Ovary (tissue), 10 donors: ENCODE measurements at regions of chr9 and their contacts with region 1.

Region 1: GRCh38 chr9:121545875-121546423 is 46.3 kb upstream of the GGTA1 start:
- DNase-seq: peak; percentile 93 to 96 (median 95)
- H3K4me3 ChIP-seq: no peak overlapping the region
- H3K27ac ChIP-seq: no peak overlapping the region
- H3K4me1 ChIP-seq: no peaks in the 10 kb centered on the region
- H3K27me3 ChIP-seq: no peaks in the 10 kb centered on the region
- CTCF ChIP-seq: peak; percentile 93 to 97 (median 95)
- EP300 ChIP-seq: no peak
- POLR2A ChIP-seq: no peak

Region 2: DNA sequence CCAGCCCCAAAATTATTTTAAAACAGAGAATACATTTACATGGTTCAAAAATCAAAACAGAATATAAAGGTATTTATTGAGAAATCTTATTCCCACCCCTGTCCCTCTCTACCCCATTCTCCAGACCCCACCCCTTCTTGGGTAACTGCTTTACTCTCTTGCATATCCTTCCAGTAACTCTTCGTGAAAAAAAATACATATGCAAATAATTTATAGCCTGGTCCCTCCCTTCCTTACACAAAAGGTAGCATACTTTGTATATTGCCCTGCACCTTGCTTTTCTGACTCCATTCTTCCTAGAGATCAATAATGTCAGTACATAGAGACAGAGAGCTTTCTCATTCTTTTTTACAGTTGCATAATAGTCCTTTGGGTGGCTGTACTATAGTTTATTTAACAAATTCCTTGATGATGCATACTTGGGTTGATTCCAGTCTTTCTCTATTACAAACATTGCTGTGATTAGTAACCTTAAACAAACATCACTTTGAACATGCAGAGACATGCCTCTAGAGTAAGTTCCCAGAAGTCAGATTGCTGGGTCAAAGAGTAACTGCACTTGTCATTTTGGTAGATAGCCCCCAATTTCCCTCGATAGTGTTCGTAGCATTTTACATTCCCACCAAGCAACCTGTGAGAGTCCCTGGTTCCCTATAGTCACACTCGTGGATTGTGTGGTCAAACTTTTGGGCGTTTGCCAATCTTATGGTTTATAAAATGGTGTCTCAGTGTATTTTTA is 223.7 kb before region 1 on chr9:
- intact Hi-C with region 1: no loop called
- DNase-seq: no peak
- H3K4me3 ChIP-seq: no peak overlapping the region
- H3K27ac ChIP-seq: no peak overlapping the region
- H3K4me1 ChIP-seq: peaks cover 12% of the 10 kb centered on the region
- H3K27me3 ChIP-seq: no peaks in the 10 kb centered on the region
- CTCF ChIP-seq: no peak
- EP300 ChIP-seq: no peak
- POLR2A ChIP-seq: no peak

Region 3: DNA sequence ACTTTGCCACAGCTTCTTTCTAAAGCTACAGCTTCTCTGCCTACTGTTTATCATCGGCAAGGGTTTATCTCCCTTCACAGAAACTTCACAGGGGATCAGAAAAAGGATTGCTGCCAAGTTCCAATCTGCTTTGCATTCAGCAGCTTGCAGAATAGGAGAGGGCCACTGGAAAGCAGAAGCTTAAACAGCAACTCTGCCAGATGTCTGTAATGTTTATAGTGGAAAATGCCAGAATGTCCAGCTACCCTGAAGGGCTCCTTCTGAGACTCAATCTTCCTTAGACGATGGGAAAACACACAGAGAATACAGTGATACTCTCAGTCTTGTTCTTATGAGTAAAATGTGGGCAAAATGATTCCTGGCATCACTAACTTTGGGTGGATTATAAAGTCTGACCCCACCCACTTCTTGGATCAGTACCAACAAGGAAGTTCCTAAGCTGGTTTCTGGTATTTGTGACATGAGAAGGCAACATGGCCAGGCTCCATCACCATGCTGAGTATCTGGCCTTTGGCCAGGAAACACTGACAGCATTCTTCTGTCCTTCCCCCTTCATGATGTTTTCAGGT is 194.9 kb before region 1 on chr9:
- intact Hi-C with region 1: no loop called
- DNase-seq: peak; percentile 52 to 69 (median 62)
- H3K4me3 ChIP-seq: no peak overlapping the region
- H3K27ac ChIP-seq: peak overlapping the region in 1 of 2 donors; percentile 66
- H3K4me1 ChIP-seq: peaks cover 28% of the 10 kb centered on the region
- H3K27me3 ChIP-seq: no peaks in the 10 kb centered on the region
- CTCF ChIP-seq: no peak
- EP300 ChIP-seq: no peak
- POLR2A ChIP-seq: no peak

Region 4: GRCh38 chr9:121609845-121610570 is 64.1 kb after region 1 on chr9:
- intact Hi-C with region 1: loop called in 1 of 4 experiments (anchors 10 kb)
- DNase-seq: peak in 4 of 5 donors; percentile 44 to 53 (median 48)
- H3K4me3 ChIP-seq: no peak overlapping the region
- H3K27ac ChIP-seq: no peak overlapping the region
- H3K4me1 ChIP-seq: peaks cover 2% of the 10 kb centered on the region
- H3K27me3 ChIP-seq: no peaks in the 10 kb centered on the region
- CTCF ChIP-seq: no peak
- EP300 ChIP-seq: no peak
- POLR2A ChIP-seq: no peak

Region 5: GRCh38 chr9:121735065-121735789 is 189.3 kb after region 1 on chr9:
- intact Hi-C with region 1: no loop called
- DNase-seq: peak in 2 of 5 donors; percentile 45 to 47
- H3K4me3 ChIP-seq: peak overlapping the region; percentile 45
- H3K27ac ChIP-seq: peak overlapping the region; percentile 64 to 67
- H3K4me1 ChIP-seq: peaks cover 55% of the 10 kb centered on the region
- H3K27me3 ChIP-seq: no peaks in the 10 kb centered on the region
- CTCF ChIP-seq: no peak
- EP300 ChIP-seq: no peak
- POLR2A ChIP-seq: no peak

Region 6: DNA sequence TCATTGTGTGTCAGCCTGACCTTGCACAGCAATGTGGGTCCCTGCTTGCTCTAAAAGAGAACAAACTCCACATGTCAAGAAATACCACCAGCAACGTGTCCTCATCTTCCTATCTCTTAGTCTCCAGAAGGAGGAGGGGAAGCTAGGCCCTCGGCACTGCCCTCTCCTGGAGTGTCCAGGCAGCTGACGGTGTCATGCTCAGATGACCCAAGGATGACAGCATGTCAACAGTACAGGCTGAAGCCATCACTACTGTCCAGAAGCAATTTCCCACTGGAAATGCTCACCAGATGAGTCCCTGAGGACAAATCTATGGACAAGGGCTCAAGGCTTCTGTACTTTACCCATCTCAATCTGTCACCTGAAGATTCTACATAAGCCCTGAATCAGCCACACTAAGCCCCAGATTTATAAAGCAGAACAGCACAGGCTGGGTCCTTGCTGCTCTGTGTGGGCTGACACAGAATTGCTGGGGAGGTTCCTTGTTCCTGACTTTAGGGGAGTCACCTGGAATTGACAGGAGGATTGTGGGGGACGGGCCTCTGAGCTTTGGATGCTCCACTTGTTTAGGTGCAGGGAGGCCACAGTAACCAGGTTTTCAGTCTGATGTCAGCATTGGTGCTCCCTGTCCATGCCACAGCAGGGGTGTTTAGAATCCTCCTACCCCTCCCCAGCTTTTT is 315.7 kb after region 1 on chr9:
- intact Hi-C with region 1: loop called in 1 of 4 experiments (anchors 2 kb)
- DNase-seq: no peak
- H3K4me3 ChIP-seq: no peak overlapping the region
- H3K27ac ChIP-seq: peak overlapping the region in 1 of 2 donors; percentile 36
- H3K4me1 ChIP-seq: peaks cover 5% of the 10 kb centered on the region
- H3K27me3 ChIP-seq: no peaks in the 10 kb centered on the region
- CTCF ChIP-seq: peak in 2 of 3 donors; percentile 16 to 34
- EP300 ChIP-seq: no peak
- POLR2A ChIP-seq: no peak

Region 7: DNA sequence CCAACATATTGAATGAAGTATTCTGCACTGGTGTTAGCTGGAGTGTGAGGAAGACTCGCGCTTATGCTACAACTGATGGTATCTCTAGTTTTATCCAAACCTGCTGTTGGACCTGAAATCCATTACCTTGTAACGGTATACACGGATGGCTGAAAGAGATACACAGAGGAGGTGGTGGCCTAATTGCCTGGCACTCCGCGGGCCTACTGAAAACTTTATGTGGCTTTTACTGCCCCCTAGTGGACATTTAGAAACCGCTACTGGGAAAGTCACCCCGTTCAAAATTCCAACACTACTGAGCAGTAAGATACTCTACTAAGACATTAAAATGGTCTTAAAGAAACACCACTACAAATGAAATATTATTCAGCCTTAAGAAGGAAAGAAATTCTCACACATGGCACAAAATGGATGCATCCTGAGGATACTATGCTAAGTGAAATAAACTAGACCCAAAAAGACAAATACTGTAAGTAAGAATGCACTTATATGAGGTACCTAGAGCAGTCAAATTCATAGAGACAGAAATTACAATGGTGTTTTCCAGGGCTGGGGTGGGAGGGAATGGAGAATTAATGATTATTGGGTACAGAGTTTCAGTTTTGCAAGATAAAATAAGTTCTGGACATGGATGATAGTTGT is 446.7 kb after region 1 on chr9:
- intact Hi-C with region 1: loop called (anchors 5 to 10 kb)
- DNase-seq: peak; percentile 54 to 77 (median 66)
- H3K4me3 ChIP-seq: no peak overlapping the region
- H3K27ac ChIP-seq: no peak overlapping the region
- H3K4me1 ChIP-seq: peaks cover under 1% of the 10 kb centered on the region
- H3K27me3 ChIP-seq: no peaks in the 10 kb centered on the region
- CTCF ChIP-seq: peak; percentile 81 to 86 (median 84)
- EP300 ChIP-seq: no peak
- POLR2A ChIP-seq: no peak

Region 8: DNA sequence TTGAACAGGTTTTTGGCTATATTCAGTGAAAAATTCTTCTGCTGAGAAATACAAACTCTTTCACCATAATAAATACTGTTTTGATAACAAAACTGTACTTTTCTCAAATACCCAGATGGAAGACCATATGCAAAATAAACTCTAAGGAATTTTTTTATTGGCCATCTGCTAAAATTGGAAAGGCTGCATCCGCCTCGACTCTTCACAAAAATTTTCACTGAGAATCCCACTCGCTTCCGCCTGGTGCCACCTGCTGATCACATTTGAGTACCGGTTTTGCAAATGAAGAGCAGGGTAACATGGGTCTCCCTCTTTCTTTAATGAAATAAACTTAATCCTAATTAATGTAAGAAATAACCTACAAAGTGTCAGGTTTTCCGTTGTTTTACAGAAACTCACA is 470.8 kb after region 1 on chr9:
- intact Hi-C with region 1: loop called in 2 of 4 experiments (anchors 5 kb)
- DNase-seq: peak; percentile 27 to 62 (median 52)
- H3K4me3 ChIP-seq: no peak overlapping the region
- H3K27ac ChIP-seq: no peak overlapping the region
- H3K4me1 ChIP-seq: peaks cover 4% of the 10 kb centered on the region
- H3K27me3 ChIP-seq: no peaks in the 10 kb centered on the region
- CTCF ChIP-seq: peak in 2 of 3 donors; percentile 32 to 54
- EP300 ChIP-seq: no peak
- POLR2A ChIP-seq: no peak

Region 9: GRCh38 chr9:122546190-122546589 is 1000.2 kb after region 1 on chr9:
- intact Hi-C with region 1: no loop called
- DNase-seq: no peak
- H3K4me3 ChIP-seq: no peak overlapping the region
- H3K27ac ChIP-seq: no peak overlapping the region
- H3K4me1 ChIP-seq: no peaks in the 10 kb centered on the region
- H3K27me3 ChIP-seq: no peaks in the 10 kb centered on the region
- CTCF ChIP-seq: no peak
- EP300 ChIP-seq: no peak
- POLR2A ChIP-seq: no peak